CD4-positive, alpha-beta T cell (primary cell): ENCODE measurements at regions of chr5 and their contacts with region 1.

Region 1: GRCh38 chr5:32585446-32586275 is at the start of gene SUB1:
- DNase-seq: peak; percentile 88 to 97 (median 93)
- ATAC-seq: peak; percentile 91
- H3K4me3 ChIP-seq: peak within 1 kb of the TSS; percentile 84
- H3K4me3 Mint-ChIP-seq: peak within 1 kb of the TSS; percentile 96
- H3K27ac ChIP-seq: peak within 1 kb of the TSS; percentile 99 to 100
- H3K27ac Mint-ChIP-seq: peak within 1 kb of the TSS; percentile 97
- H3K4me1 ChIP-seq: peaks cover 58% of the 10 kb centered on the region
- H3K4me1 Mint-ChIP-seq: peaks cover 73% of the 10 kb centered on the region
- H3K27me3 ChIP-seq: no peaks in the 10 kb centered on the region
- H3K27me3 Mint-ChIP-seq: no peaks in the 10 kb centered on the region
- CTCF ChIP-seq: no peak
- total RNA-seq, gene SUB1: 327 to 344 TPM

Region 2: DNA sequence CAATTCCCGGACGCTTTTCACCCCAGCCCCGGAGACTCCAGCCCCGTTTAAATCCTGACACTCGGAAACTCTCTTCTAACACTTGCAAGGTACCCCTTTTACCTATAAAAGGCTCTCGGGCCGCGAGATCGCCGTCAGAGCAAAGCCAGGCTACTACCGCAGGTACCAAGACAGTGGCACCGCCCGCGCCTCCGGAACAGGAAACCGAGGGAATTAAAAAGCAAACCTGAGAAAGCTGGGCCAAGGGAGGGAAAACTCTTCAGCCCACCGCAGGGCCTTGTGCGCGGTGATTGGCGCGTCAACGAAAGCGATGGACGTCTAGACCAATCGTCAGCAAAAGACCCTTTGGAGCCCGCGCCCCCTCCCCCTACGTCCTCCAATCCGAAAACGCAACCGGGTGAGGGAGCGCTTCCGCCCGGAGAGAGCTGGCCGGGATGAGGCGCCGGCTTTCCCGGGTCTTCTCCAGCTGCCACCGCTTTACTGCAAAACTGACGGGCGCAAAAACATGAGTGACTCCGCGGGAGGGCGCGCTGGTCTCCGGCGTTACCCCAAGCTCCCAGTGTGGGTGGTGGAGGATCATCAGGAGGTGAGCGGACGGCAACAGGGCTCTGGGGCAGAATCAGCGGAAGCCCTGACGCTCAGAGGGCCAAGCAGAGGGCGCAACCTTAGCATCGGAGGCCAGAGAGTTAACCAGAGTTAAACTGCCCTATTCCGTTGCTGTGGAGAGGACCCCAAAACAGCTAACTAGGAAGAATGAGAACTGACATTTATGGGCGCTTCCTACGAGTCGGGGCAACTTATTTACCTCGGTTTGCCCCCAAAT is 1053.6 kb before region 1 on chr5 and contains the starts of genes C5orf22 and DROSHA:
- CTCF ChIA-PET with region 1: no interaction called
- POLR2A ChIA-PET with region 1: no interaction called
- intact Hi-C with region 1: loop called in 1 of 2 experiments (anchors 5 kb)
- DNase-seq: peak; percentile 78 to 95 (median 88)
- ATAC-seq: peak; percentile 96
- H3K4me3 ChIP-seq: peak within 1 kb of the TSS; percentile 83
- H3K4me3 Mint-ChIP-seq: peak within 1 kb of the TSS; percentile 98
- H3K27ac ChIP-seq: peak within 1 kb of the TSS; percentile 48 to 65
- H3K27ac Mint-ChIP-seq: peak within 1 kb of the TSS; percentile 90
- H3K4me1 ChIP-seq: peaks cover 33% of the 10 kb centered on the region
- H3K4me1 Mint-ChIP-seq: peaks cover 76% of the 10 kb centered on the region
- H3K27me3 ChIP-seq: no peaks in the 10 kb centered on the region
- H3K27me3 Mint-ChIP-seq: no peaks in the 10 kb centered on the region
- CTCF ChIP-seq: no peak
- total RNA-seq, gene C5orf22: 9.8 to 12.3 TPM
- total RNA-seq, gene DROSHA: 28.8 to 38.1 TPM

Region 3: DNA sequence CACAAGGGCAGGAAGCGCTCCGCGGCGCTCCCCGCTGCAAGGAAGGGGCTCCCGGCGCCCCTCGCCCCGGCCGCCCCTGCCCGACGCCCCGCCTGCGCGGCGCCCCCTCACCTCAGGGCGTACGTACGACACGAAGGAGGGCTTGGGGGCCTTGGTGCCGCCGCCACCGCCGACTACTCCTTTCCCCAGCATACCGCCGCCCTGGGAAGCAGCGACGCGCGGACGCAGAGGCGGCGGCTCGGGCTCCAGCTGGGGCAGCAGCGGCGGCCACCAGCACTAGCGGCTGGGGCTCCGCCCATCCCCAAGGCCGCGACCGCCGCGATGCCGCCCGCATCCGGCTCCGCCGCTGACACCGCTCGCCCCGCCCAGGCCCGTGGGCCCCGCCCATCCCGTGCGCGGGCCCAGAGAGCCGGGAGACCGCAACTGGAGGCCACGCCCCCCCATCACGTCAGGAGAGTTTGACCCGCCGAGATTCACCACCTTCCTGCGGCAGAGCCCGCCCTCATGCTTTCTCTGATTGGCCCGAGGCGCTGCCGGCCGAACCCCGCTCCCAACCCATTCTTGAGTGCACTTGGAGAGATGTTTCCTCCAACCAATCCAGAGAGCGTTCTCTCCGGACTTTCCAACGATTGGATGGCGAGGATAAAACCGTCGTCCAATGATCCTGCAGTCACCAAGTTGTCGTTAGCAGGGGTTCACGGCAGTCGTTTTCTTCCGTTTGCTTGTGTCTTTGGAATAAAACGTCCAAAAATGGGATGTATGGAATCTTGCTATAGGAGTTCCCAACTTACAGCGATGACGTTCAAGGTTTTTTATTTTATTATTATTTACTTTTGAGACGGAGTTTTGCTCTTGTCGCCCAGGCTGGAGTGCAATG is 272.8 kb before region 1 on chr5 and contains the start of gene MTMR12:
- CTCF ChIA-PET with region 1: no interaction called
- POLR2A ChIA-PET with region 1: interaction called, 3 read pairs
- intact Hi-C with region 1: loop called in 1 of 2 experiments (anchors 5 kb)
- DNase-seq: peak; percentile 99 to 100 (median 100)
- ATAC-seq: peak; percentile 92
- H3K4me3 ChIP-seq: peak within 1 kb of the TSS; percentile 87
- H3K4me3 Mint-ChIP-seq: peak within 1 kb of the TSS; percentile 91
- H3K27ac ChIP-seq: peak within 1 kb of the TSS; percentile 65 to 78
- H3K27ac Mint-ChIP-seq: peak within 1 kb of the TSS; percentile 93
- H3K4me1 ChIP-seq: peaks cover 35% of the 10 kb centered on the region
- H3K4me1 Mint-ChIP-seq: peaks cover 43% of the 10 kb centered on the region
- H3K27me3 ChIP-seq: no peaks in the 10 kb centered on the region
- H3K27me3 Mint-ChIP-seq: no peaks in the 10 kb centered on the region
- CTCF ChIP-seq: no peak
- total RNA-seq, gene MTMR12: 15.9 to 18.3 TPM

Region 4: DNA sequence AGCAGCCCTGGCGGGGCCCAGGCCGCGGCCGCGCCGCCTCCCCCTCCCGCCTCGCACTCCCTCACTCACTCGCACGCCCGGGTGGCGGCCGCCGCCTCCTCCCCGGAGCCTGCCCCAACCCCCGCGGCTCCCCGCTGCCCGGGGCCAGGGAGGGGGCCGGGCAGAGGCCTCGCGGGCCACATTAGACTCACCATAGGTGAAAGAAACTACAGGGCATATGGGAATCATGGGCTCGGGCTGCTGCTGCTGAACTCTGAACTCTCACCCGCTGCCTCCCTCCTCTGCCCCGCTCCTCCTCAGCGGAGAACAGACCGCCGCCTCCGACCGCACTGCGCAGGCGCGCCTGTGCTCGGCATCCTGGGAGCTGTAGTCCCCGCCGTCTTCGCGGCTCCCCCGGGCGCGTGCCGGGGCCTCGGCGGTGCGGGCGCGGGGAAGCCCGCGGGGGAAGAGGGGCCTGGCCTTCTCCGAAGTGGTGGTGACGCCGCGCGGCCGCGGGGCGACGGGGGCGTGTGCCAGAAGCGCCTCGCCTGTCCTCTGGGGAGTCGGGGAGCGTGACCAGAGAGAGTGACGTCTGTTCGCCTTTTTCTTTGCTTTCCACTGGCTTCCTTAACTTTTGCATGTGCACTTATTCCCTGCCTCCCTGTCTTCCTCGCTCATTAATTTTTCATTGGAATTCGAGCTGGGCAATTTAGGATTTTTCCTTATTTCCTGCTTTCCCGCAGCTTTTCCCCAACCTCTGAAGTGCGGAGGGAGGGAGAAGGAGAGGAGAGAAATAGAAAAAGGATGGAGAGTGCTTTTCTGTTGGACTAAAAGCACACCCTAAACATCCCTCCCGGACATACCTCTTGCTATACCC is 141.0 kb before region 1 on chr5 and contains the start of gene ZFR:
- CTCF ChIA-PET with region 1: interaction called, 5 read pairs
- POLR2A ChIA-PET with region 1: interaction called, 20 read pairs
- intact Hi-C with region 1: loop called (anchors 1 kb)
- DNase-seq: peak; percentile 84 to 98 (median 92)
- ATAC-seq: peak; percentile 92
- H3K4me3 ChIP-seq: peak within 1 kb of the TSS; percentile 89
- H3K4me3 Mint-ChIP-seq: peak within 1 kb of the TSS; percentile 93
- H3K27ac ChIP-seq: peak within 1 kb of the TSS; percentile 88 to 91
- H3K27ac Mint-ChIP-seq: peak within 1 kb of the TSS; percentile 89
- H3K4me1 ChIP-seq: peaks cover 26% of the 10 kb centered on the region
- H3K4me1 Mint-ChIP-seq: peaks cover 32% of the 10 kb centered on the region
- H3K27me3 ChIP-seq: no peaks in the 10 kb centered on the region
- H3K27me3 Mint-ChIP-seq: no peaks in the 10 kb centered on the region
- CTCF ChIP-seq: no peak
- total RNA-seq, gene ZFR: 58.8 to 61.0 TPM

Region 5: GRCh38 chr5:32458880-32459495 is 126.7 kb before region 1 on chr5:
- CTCF ChIA-PET with region 1: no interaction called
- POLR2A ChIA-PET with region 1: no interaction called
- intact Hi-C with region 1: no loop called
- DNase-seq: no peak
- ATAC-seq: no peak
- H3K4me3 ChIP-seq: no peak overlapping the region
- H3K4me3 Mint-ChIP-seq: no peak overlapping the region
- H3K27ac ChIP-seq: no peak overlapping the region
- H3K27ac Mint-ChIP-seq: no peak overlapping the region
- H3K4me1 ChIP-seq: no peaks in the 10 kb centered on the region
- H3K4me1 Mint-ChIP-seq: peaks cover 7% of the 10 kb centered on the region
- H3K27me3 ChIP-seq: no peaks in the 10 kb centered on the region
- H3K27me3 Mint-ChIP-seq: no peaks in the 10 kb centered on the region
- CTCF ChIP-seq: no peak

Region 6: GRCh38 chr5:32496104-32496503 is 89.6 kb before region 1 on chr5:
- CTCF ChIA-PET with region 1: interaction called, 16 read pairs
- POLR2A ChIA-PET with region 1: interaction called, 5 read pairs
- intact Hi-C with region 1: no loop called
- DNase-seq: no peak
- ATAC-seq: no peak
- H3K4me3 ChIP-seq: no peak overlapping the region
- H3K4me3 Mint-ChIP-seq: no peak overlapping the region
- H3K27ac ChIP-seq: no peak overlapping the region
- H3K27ac Mint-ChIP-seq: no peak overlapping the region
- H3K4me1 ChIP-seq: no peaks in the 10 kb centered on the region
- H3K4me1 Mint-ChIP-seq: no peaks in the 10 kb centered on the region
- H3K27me3 ChIP-seq: no peaks in the 10 kb centered on the region
- H3K27me3 Mint-ChIP-seq: no peaks in the 10 kb centered on the region
- CTCF ChIP-seq: no peak

Region 7: GRCh38 chr5:32531885-32532520 is 53.7 kb before region 1 on chr5:
- CTCF ChIA-PET with region 1: interaction called, 9 read pairs
- POLR2A ChIA-PET with region 1: interaction called, 47 read pairs
- intact Hi-C with region 1: loop called (anchors 1 to 2 kb)
- DNase-seq: peak; percentile 27 to 86 (median 45)
- ATAC-seq: peak; percentile 74
- H3K4me3 ChIP-seq: peak overlapping the region; percentile 53
- H3K4me3 Mint-ChIP-seq: peak overlapping the region; percentile 87
- H3K27ac ChIP-seq: peak overlapping the region; percentile 76 to 88
- H3K27ac Mint-ChIP-seq: peak overlapping the region; percentile 94
- H3K4me1 ChIP-seq: peaks cover 36% of the 10 kb centered on the region
- H3K4me1 Mint-ChIP-seq: peaks cover 53% of the 10 kb centered on the region
- H3K27me3 ChIP-seq: no peaks in the 10 kb centered on the region
- H3K27me3 Mint-ChIP-seq: no peaks in the 10 kb centered on the region
- CTCF ChIP-seq: no peak

Region 8: GRCh38 chr5:32726086-32726557 is 140.5 kb after region 1 on chr5:
- CTCF ChIA-PET with region 1: no interaction called
- POLR2A ChIA-PET with region 1: no interaction called
- intact Hi-C with region 1: no loop called
- DNase-seq: no peak
- ATAC-seq: no peak
- H3K4me3 ChIP-seq: no peak overlapping the region
- H3K4me3 Mint-ChIP-seq: no peak overlapping the region
- H3K27ac ChIP-seq: no peak overlapping the region
- H3K27ac Mint-ChIP-seq: no peak overlapping the region
- H3K4me1 ChIP-seq: no peaks in the 10 kb centered on the region
- H3K4me1 Mint-ChIP-seq: no peaks in the 10 kb centered on the region
- H3K27me3 ChIP-seq: no peaks in the 10 kb centered on the region
- H3K27me3 Mint-ChIP-seq: peaks cover 22% of the 10 kb centered on the region
- CTCF ChIP-seq: no peak